ENCODE measurements at regions of chr4 and their contacts with region 1.

Region 1: DNA sequence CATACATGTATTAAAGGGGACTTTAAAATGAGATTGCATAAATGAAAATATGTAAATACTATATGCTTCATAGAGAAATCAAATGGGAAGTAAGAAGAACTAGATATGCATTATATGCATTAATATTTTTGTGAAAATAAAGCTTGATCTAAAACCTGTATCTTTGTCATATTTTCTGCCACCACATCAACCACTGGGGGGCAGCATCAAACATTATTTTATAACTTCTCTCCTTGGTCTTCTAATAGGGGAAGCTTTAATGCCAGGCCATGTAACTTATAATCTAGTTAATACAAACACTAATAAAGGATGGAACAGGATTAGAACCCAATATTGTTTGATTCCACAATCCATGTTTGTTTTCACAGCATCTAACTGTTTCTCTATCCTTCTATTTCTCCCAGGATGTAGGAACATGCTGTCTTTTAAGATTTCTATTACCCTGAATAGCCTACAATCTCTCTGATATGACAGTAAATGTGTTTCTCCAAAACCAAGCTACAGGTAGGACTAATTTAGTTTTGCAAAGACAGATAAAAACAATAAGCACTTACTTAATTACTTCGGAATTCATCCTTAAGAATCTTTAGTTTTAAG is 10.0 kb downstream of the QRFPR start:
- DNase-seq: no peak
- H3K4me3 ChIP-seq: no peak overlapping the region
- H3K27ac ChIP-seq: no peak overlapping the region
- H3K4me1 ChIP-seq: no peaks in the 10 kb centered on the region
- H3K27me3 ChIP-seq: no peaks in the 10 kb centered on the region
- CTCF ChIP-seq: peak in 2 of 3 experiments; percentile 25 to 43; a peak in 2 of 4 replicates
- EP300 ChIP-seq: no peak
- POLR2A ChIP-seq: no peak
- RAD21 ChIP-seq: peak; percentile 50 to 54

Region 2: DNA sequence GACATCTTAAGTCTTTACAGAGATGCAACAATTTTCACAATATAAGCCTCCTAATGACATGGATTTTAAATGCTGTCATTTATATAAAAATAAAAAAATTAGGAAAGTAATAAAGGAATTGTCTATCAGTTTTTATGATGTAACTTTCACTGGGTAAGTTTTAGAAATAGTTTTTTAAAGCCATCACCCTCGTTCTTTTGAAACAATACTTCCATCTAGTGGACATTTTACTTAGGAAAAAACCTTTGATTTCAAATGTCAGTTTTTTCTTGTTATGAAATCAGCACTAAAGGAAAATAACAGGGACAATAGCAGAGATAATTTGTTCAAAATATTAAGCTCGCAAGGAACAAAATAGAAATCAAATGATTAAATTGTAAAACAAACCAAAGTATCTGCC is 274.2 kb before region 1 on chr4:
- CTCF ChIA-PET with region 1: no interaction called
- POLR2A ChIA-PET with region 1: no interaction called
- DNase-seq: no peak
- H3K4me3 ChIP-seq: no peak overlapping the region
- H3K27ac ChIP-seq: no peak overlapping the region
- H3K4me1 ChIP-seq: no peaks in the 10 kb centered on the region
- H3K27me3 ChIP-seq: no peaks in the 10 kb centered on the region
- CTCF ChIP-seq: peak in 1 of 3 experiments; percentile 16; a peak in 1 of 4 replicates
- EP300 ChIP-seq: no peak
- POLR2A ChIP-seq: no peak
- RAD21 ChIP-seq: peak in 1 of 2 experiments; percentile 73; a peak in 3 of 4 replicates

Region 3: GRCh38 chr4:121129606-121130325 is 241.1 kb before region 1 on chr4:
- CTCF ChIA-PET with region 1: no interaction called
- POLR2A ChIA-PET with region 1: no interaction called
- DNase-seq: no peak
- H3K4me3 ChIP-seq: no peak overlapping the region
- H3K27ac ChIP-seq: no peak overlapping the region
- H3K4me1 ChIP-seq: no peaks in the 10 kb centered on the region
- H3K27me3 ChIP-seq: no peaks in the 10 kb centered on the region
- CTCF ChIP-seq: no peak
- EP300 ChIP-seq: no peak
- POLR2A ChIP-seq: no peak
- RAD21 ChIP-seq: no peak

Region 4: DNA sequence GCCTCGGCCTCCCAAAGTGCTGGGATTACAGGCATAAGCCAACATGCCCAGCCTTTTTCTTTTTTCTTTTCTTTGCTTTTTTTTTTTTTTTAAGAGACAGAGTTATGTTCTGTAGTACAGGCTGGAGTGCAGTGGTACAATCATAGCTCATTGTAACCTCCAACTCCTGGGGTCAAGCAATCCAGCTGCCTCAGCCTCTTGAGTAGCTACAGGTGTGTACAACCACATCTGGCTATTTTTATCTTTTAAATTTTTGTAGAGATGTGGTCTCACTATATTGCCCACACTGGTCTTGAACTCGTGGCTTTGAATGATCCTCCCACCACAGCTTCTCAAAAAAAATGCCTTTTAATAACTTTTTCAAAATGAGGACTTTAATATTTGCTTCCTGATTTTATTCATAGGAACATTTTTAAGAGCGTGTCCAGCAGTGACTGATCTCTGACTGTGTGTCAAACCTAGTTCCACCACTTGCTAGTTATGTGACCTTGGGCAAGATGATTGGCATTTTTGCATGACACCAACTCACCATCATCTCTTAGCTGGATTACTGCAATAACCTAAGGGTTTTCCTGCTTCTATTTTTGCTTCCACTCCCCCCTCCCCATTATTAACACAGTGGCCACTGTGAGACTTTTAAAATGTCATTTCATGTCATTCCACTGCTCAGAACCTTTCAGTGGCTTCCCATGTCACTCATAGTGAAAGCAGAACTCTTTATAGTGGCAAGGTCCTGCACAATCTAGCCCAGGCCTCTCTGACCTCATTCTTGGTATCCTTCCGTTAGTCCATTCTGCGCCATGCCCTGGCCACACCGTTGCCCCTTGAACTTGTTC is 202.2 kb before region 1 on chr4:
- CTCF ChIA-PET with region 1: no interaction called
- POLR2A ChIA-PET with region 1: no interaction called
- DNase-seq: no peak
- H3K4me3 ChIP-seq: no peak overlapping the region
- H3K27ac ChIP-seq: no peak overlapping the region
- H3K4me1 ChIP-seq: no peaks in the 10 kb centered on the region
- H3K27me3 ChIP-seq: no peaks in the 10 kb centered on the region
- CTCF ChIP-seq: no peak
- EP300 ChIP-seq: no peak
- POLR2A ChIP-seq: no peak
- RAD21 ChIP-seq: no peak

Region 5: GRCh38 chr4:121358473-121358872 is 12.4 kb before region 1 on chr4:
- CTCF ChIA-PET with region 1: interaction called, 15 read pairs
- POLR2A ChIA-PET with region 1: no interaction called
- DNase-seq: no peak
- H3K4me3 ChIP-seq: no peak overlapping the region
- H3K27ac ChIP-seq: no peak overlapping the region
- H3K4me1 ChIP-seq: no peaks in the 10 kb centered on the region
- H3K27me3 ChIP-seq: no peaks in the 10 kb centered on the region
- CTCF ChIP-seq: no peak
- EP300 ChIP-seq: no peak
- POLR2A ChIP-seq: no peak
- RAD21 ChIP-seq: no peak

Region 6: GRCh38 chr4:121390335-121390734 is 19.5 kb after region 1 on chr4:
- CTCF ChIA-PET with region 1: interaction called, 11 read pairs
- POLR2A ChIA-PET with region 1: no interaction called
- DNase-seq: no peak
- H3K4me3 ChIP-seq: no peak overlapping the region
- H3K27ac ChIP-seq: no peak overlapping the region
- H3K4me1 ChIP-seq: no peaks in the 10 kb centered on the region
- H3K27me3 ChIP-seq: no peaks in the 10 kb centered on the region
- CTCF ChIP-seq: no peak
- EP300 ChIP-seq: no peak
- POLR2A ChIP-seq: no peak
- RAD21 ChIP-seq: no peak

Region 7: DNA sequence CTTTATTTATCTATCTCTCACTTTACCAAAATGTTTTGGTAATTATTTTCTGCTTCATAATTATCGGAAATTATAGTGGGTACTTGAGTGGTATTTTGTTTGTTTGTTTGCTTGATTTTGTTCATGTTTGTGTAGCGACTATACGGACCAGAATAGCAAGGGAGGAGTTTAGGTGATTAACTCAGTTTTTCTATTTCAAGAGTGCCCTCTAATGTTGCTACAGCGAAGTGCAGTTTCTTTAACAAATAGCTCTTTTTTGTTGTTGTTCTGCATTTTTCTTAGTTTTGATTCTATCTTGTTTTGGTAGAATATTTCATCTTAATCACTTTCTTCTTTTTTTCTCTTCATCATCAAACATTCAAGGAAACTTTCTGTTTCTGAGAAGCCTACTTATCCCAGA is 50.8 kb after region 1 on chr4:
- CTCF ChIA-PET with region 1: interaction called, 33 read pairs
- POLR2A ChIA-PET with region 1: no interaction called
- DNase-seq: no peak
- H3K4me3 ChIP-seq: no peak overlapping the region
- H3K27ac ChIP-seq: no peak overlapping the region
- H3K4me1 ChIP-seq: no peaks in the 10 kb centered on the region
- H3K27me3 ChIP-seq: no peaks in the 10 kb centered on the region
- CTCF ChIP-seq: peak in 2 of 3 experiments; percentile 50 to 64; a peak in 2 of 4 replicates
- EP300 ChIP-seq: no peak
- POLR2A ChIP-seq: no peak
- RAD21 ChIP-seq: peak; percentile 70 to 76

Region 8: DNA sequence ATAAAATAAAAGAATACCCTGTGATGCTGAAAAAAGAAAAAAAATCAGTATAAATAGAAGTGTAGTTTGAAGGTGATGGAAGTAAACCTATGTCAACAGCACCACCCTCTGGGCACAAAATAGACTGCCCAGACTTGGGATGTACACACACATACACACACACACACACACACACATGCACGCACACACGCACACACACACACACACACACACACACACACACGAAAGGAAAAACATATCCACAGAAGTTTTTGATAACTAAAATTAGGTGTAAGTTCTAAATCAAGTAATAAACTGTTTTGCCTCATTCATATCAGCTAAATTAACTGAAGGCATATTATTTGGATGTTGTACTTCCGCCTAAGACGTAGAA is 285.4 kb after region 1 on chr4:
- CTCF ChIA-PET with region 1: interaction called, 13 read pairs
- POLR2A ChIA-PET with region 1: no interaction called
- DNase-seq: no peak
- H3K4me3 ChIP-seq: no peak overlapping the region
- H3K27ac ChIP-seq: no peak overlapping the region
- H3K4me1 ChIP-seq: no peaks in the 10 kb centered on the region
- H3K27me3 ChIP-seq: no peaks in the 10 kb centered on the region
- CTCF ChIP-seq: peak; percentile 15 to 58 (median 54); a peak in 3 of 4 replicates
- EP300 ChIP-seq: no peak
- POLR2A ChIP-seq: no peak
- RAD21 ChIP-seq: peak; percentile 71 to 73

Region 9: GRCh38 chr4:121674696-121675095 is 303.9 kb after region 1 on chr4:
- CTCF ChIA-PET with region 1: no interaction called
- POLR2A ChIA-PET with region 1: no interaction called
- DNase-seq: no peak
- H3K4me3 ChIP-seq: no peak overlapping the region
- H3K27ac ChIP-seq: no peak overlapping the region
- H3K4me1 ChIP-seq: peaks cover 0 to 4% (median 1%) of the 10 kb centered on the region in 4 experiments; a peak in 2 of 7 replicates
- H3K27me3 ChIP-seq: no peaks in the 10 kb centered on the region
- CTCF ChIP-seq: no peak
- EP300 ChIP-seq: no peak
- POLR2A ChIP-seq: no peak
- RAD21 ChIP-seq: no peak

Measured in H1 (cell line).